Activated CD8-positive, alpha-beta T cell treated with anti-CD3 and anti-CD28 coated beads, Interleukin-2, amount 10 ng/mL, durations not matched to agents 7 days and 5 days (primary cell): ENCODE measurements at regions of chr22 and their contacts with region 1.

Region 1: DNA sequence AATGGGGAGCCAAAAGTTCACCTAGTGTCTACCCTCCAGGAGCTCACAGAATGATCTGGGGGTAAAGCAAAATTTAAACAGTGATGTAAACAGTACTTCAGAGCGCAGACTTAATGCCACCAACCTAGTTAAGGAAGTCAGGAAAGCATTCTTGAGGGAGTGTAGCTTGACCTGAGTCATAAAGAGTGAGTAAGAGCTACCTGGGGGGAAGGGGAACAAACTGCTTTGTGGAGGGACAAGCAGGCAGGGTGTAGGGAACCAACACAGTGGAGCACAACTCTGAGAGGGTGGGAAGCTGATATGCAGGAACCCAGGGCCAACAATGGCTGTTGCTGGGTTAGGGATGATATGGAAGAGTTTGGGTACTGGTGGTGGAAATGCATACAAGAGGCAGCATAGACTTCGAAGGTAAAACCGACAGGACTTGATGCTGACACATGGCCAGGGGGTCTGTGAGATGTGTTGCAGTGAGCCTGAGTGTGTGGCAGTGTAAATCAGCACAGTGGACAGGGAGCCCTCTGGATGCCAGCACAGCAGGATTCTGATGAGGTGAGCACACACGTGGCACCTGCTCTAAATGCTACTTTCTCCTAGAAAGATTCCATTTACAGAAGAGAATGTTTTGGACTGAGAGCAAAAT is 58.3 kb upstream of the CYP2D6 start:
- DNase-seq: no peak
- ATAC-seq: no peak
- H3K4me3 Mint-ChIP-seq: no peak overlapping the region
- H3K27ac Mint-ChIP-seq: peak overlapping the region; percentile 31
- H3K4me1 Mint-ChIP-seq: peaks cover 11% of the 10 kb centered on the region
- H3K27me3 Mint-ChIP-seq: no peaks in the 10 kb centered on the region

Region 2: GRCh38 chr22:42202669-42203068 is 13.7 kb after region 1 on chr22:
- CTCF ChIA-PET with region 1: interaction called, 12 read pairs
- POLR2A ChIA-PET with region 1: interaction called, 4 read pairs
- DNase-seq: peak; percentile 65
- ATAC-seq: peak; percentile 88
- H3K4me3 Mint-ChIP-seq: peak overlapping the region; percentile 61
- H3K27ac Mint-ChIP-seq: peak overlapping the region; percentile 77
- H3K4me1 Mint-ChIP-seq: peaks cover 38% of the 10 kb centered on the region
- H3K27me3 Mint-ChIP-seq: no peaks in the 10 kb centered on the region